Activated CD8-positive, alpha-beta T cell treated with anti-CD3 and anti-CD28 coated beads for 36 hours (primary cell): ENCODE measurements at regions of chr5 and their contacts with region 1.

Region 1: DNA sequence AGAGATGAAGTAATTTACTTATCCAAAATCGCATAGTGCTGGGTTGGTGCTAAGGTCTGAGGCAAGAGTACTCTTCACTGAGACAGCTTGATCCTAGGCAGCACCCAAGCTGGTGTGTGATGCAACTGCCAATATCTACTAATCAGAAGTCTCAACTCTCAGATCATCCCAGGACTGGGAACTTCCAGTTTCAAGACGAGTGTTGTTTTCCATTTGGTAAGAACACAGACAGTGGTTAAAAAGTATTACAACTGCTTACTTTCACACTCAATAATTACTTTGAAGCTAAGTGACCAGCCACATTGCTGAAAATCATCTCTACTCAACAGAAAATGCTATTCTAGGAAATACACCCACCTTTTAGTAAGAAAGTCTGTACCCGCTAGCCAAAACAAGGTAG is 45.3 kb downstream of the FBXW11 start:
- DNase-seq: peak; percentile 81
- ATAC-seq: peak; percentile 67
- H3K4me3 Mint-ChIP-seq: peak overlapping the region; percentile 47
- H3K27ac Mint-ChIP-seq: peak overlapping the region; percentile 86
- H3K4me1 Mint-ChIP-seq: peaks cover 90% of the 10 kb centered on the region
- H3K27me3 Mint-ChIP-seq: no peaks in the 10 kb centered on the region
- CTCF ChIP-seq: no peak

Region 2: GRCh38 chr5:171984748-171985419 is 23.8 kb after region 1 on chr5:
- CTCF ChIA-PET with region 1: interaction called, 3 read pairs
- POLR2A ChIA-PET with region 1: interaction called, 10 read pairs
- intact Hi-C with region 1: no loop called
- DNase-seq: peak; percentile 67
- ATAC-seq: peak; percentile 85
- H3K4me3 Mint-ChIP-seq: no peak overlapping the region
- H3K27ac Mint-ChIP-seq: peak overlapping the region; percentile 63
- H3K4me1 Mint-ChIP-seq: peaks cover 52% of the 10 kb centered on the region
- H3K27me3 Mint-ChIP-seq: no peaks in the 10 kb centered on the region
- CTCF ChIP-seq: no peak

Region 3: GRCh38 chr5:172325452-172325851 is 364.3 kb after region 1 on chr5:
- CTCF ChIA-PET with region 1: no interaction called
- POLR2A ChIA-PET with region 1: no interaction called
- intact Hi-C with region 1: no loop called
- DNase-seq: no peak
- ATAC-seq: no peak
- H3K4me3 Mint-ChIP-seq: no peak overlapping the region
- H3K27ac Mint-ChIP-seq: no peak overlapping the region
- H3K4me1 Mint-ChIP-seq: peaks cover 3% of the 10 kb centered on the region
- H3K27me3 Mint-ChIP-seq: no peaks in the 10 kb centered on the region
- CTCF ChIP-seq: no peak